ENCODE measurements at regions of chr12 and their contacts with region 1.

Region 1: GRCh38 chr12:92208613-92209121 is 63.0 kb upstream of the BTG1 start:
- DNase-seq: peak in 8 of 14 experiments; percentile 0 to 77 (median 31)
- ATAC-seq: peak; percentile 86
- H3K4me3 ChIP-seq: peak overlapping the region; percentile 43
- H3K4me3 Mint-ChIP-seq: peak overlapping the region; percentile 49
- H3K27ac ChIP-seq: peak overlapping the region; percentile 13 to 50
- H3K27ac Mint-ChIP-seq: peak overlapping the region; percentile 85
- H3K4me1 ChIP-seq: peaks cover 30% of the 10 kb centered on the region
- H3K4me1 Mint-ChIP-seq: peaks cover 41% of the 10 kb centered on the region
- H3K27me3 ChIP-seq: no peaks in the 10 kb centered on the region
- H3K27me3 Mint-ChIP-seq: no peaks in the 10 kb centered on the region
- CTCF ChIP-seq: no peak

Region 2: GRCh38 chr12:91991399-91992187 is 217.1 kb before region 1 on chr12:
- CTCF ChIA-PET with region 1: no interaction called
- POLR2A ChIA-PET with region 1: no interaction called
- intact Hi-C with region 1: loop called in 1 of 2 experiments (anchors 10 kb)
- DNase-seq: peak in 3 of 14 experiments; percentile 72 to 79 (median 76)
- ATAC-seq: peak; percentile 89
- H3K4me3 ChIP-seq: no peak overlapping the region
- H3K4me3 Mint-ChIP-seq: peak overlapping the region; percentile 6
- H3K27ac ChIP-seq: no peak overlapping the region
- H3K27ac Mint-ChIP-seq: peak overlapping the region; percentile 59
- H3K4me1 ChIP-seq: peaks cover 3% of the 10 kb centered on the region
- H3K4me1 Mint-ChIP-seq: peaks cover 75% of the 10 kb centered on the region
- H3K27me3 ChIP-seq: no peaks in the 10 kb centered on the region
- H3K27me3 Mint-ChIP-seq: no peaks in the 10 kb centered on the region
- CTCF ChIP-seq: peak; percentile 58

Region 3: GRCh38 chr12:92297932-92298696 is 89.4 kb after region 1 on chr12:
- CTCF ChIA-PET with region 1: no interaction called
- POLR2A ChIA-PET with region 1: no interaction called
- intact Hi-C with region 1: loop called in 1 of 2 experiments (anchors 5 kb)
- DNase-seq: peak in 6 of 14 experiments; percentile 2 to 72 (median 52)
- ATAC-seq: peak; percentile 94
- H3K4me3 ChIP-seq: no peak overlapping the region
- H3K4me3 Mint-ChIP-seq: peak overlapping the region; percentile 23
- H3K27ac ChIP-seq: peak overlapping the region; percentile 29 to 58
- H3K27ac Mint-ChIP-seq: no peak overlapping the region
- H3K4me1 ChIP-seq: peaks cover 38% of the 10 kb centered on the region
- H3K4me1 Mint-ChIP-seq: peaks cover 22% of the 10 kb centered on the region
- H3K27me3 ChIP-seq: no peaks in the 10 kb centered on the region
- H3K27me3 Mint-ChIP-seq: no peaks in the 10 kb centered on the region
- CTCF ChIP-seq: no peak

Region 4: DNA sequence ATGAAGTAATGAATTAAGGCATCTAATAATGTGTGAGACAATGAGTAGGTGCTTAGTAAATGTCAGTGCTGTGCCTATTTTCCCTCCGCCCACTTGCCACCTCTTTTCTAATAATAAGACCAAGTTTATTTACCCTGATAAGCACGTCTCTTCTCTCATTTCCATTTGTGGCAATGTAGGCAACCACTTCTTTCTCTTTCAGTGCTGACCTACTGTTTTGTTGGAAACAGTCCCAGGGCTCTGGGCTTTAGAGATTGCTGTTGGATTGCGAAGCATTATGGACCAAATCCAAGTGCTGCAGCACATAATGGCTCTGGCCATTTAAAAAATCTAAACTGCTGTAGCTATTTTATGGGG is 352.9 kb after region 1 on chr12:
- CTCF ChIA-PET with region 1: no interaction called
- POLR2A ChIA-PET with region 1: interaction called, 5 read pairs
- intact Hi-C with region 1: loop called in 1 of 2 experiments (anchors 5 kb)
- DNase-seq: no peak
- ATAC-seq: no peak
- H3K4me3 ChIP-seq: no peak overlapping the region
- H3K4me3 Mint-ChIP-seq: no peak overlapping the region
- H3K27ac ChIP-seq: no peak overlapping the region
- H3K27ac Mint-ChIP-seq: no peak overlapping the region
- H3K4me1 ChIP-seq: peaks cover 9% of the 10 kb centered on the region
- H3K4me1 Mint-ChIP-seq: peaks cover 29% of the 10 kb centered on the region
- H3K27me3 ChIP-seq: no peaks in the 10 kb centered on the region
- H3K27me3 Mint-ChIP-seq: no peaks in the 10 kb centered on the region
- CTCF ChIP-seq: no peak

Region 5: DNA sequence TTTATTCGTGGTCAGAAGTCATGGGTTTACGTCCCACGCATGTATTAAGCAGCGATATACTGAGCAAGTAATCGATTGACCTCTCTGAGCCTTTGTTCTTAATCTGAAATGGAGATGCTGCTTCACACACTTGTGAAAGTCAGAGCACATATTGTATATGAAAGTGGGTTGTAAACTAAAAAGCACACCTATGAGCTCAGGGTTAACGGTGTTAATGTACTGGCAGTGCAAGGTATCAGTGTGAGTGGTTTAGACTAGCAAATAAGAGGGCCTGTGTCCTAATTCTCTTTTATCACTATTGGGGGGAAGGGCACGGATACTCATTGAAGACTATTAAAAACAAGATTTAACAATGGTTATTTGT is 1259.3 kb after region 1 on chr12:
- CTCF ChIA-PET with region 1: no interaction called
- POLR2A ChIA-PET with region 1: no interaction called
- intact Hi-C with region 1: no loop called
- DNase-seq: no peak
- ATAC-seq: no peak
- H3K4me3 ChIP-seq: peak overlapping the region; percentile 92
- H3K4me3 Mint-ChIP-seq: peak overlapping the region; percentile 92
- H3K27ac ChIP-seq: peak overlapping the region; percentile 77 to 93
- H3K27ac Mint-ChIP-seq: peak overlapping the region; percentile 95
- H3K4me1 ChIP-seq: peaks cover 25% of the 10 kb centered on the region
- H3K4me1 Mint-ChIP-seq: peaks cover 40% of the 10 kb centered on the region
- H3K27me3 ChIP-seq: no peaks in the 10 kb centered on the region
- H3K27me3 Mint-ChIP-seq: no peaks in the 10 kb centered on the region
- CTCF ChIP-seq: no peak

Measured in CD4-positive, alpha-beta T cell (primary cell).